ENCODE measurements at regions of chr1 and their contacts with region 1.

Region 1: GRCh38 chr1:26627954-26628353 is 67.9 kb upstream of the ARID1A start:
- DNase-seq: no peak
- ATAC-seq: peak; percentile 60
- H3K4me3 ChIP-seq: no peak overlapping the region
- H3K27ac ChIP-seq: peak overlapping the region; percentile 64
- H3K4me1 ChIP-seq: peaks cover 11% of the 10 kb centered on the region
- H3K27me3 ChIP-seq: no peaks in the 10 kb centered on the region
- CTCF ChIP-seq: no peak
- EP300 ChIP-seq: no peak
- POLR2A ChIP-seq: no peak
- RAD21 ChIP-seq: no peak

Region 2: DNA sequence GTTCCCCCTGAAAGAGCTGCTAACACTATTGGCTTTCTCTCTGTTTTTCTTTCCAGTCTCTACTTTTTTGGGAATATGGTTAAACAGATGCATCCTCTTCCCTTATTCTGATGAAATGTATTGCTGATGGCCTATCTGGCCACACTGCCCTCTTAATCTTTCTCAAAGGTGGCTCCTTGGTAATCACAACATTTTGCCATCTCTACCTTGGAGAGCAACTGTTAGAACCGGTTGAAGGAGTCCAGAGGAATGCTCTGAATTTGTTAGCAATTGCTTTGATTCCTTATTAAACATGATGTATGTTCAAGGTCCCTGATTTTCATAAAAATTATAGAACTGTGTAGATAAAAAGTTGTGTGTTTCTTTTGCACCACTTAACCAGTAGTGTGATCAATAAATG is 17.8 kb after region 1 on chr1:
- CTCF ChIA-PET with region 1: no interaction called
- POLR2A ChIA-PET with region 1: interaction called, 10 read pairs
- RAD21 ChIA-PET with region 1: interaction called, 3 read pairs
- SMC1A ChIA-PET with region 1: interaction called, 6 read pairs
- in situ Hi-C with region 1: no loop called
- intact Hi-C with region 1: no loop called
- DNase-seq: no peak
- ATAC-seq: no peak
- H3K4me3 ChIP-seq: no peak overlapping the region
- H3K27ac ChIP-seq: no peak overlapping the region
- H3K4me1 ChIP-seq: no peaks in the 10 kb centered on the region
- H3K27me3 ChIP-seq: no peaks in the 10 kb centered on the region
- CTCF ChIP-seq: no peak
- EP300 ChIP-seq: no peak
- POLR2A ChIP-seq: no peak
- RAD21 ChIP-seq: no peak